CD14-positive monocyte (primary cell): ENCODE measurements at regions of chr5 and their contacts with region 1.

Region 1: DNA sequence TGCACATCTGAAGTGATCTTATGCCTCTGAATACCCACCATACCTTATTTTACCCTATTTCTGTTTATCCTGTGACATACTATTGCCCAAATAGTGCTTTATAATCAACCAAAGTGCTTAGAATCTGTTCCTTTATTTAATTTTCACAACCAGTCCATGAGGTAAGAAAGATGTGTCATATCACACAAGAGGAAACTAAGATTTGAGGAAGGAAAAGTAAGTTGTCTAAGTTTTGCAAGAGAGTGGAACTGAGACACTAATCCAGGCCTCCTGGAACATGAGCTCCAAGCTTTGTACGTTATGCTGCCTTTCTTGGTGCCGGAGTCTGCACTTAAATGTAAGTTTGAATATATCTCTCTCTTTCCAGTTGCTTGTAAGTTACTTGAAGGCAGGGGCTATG is 17.2 kb downstream of the KDM3B start:
- DNase-seq: peak; percentile 80 to 90 (median 89)
- H3K4me3 ChIP-seq: peak overlapping the region; percentile 30 to 89 (median 77)
- H3K4me3 Mint-ChIP-seq: peak overlapping the region; percentile 79 to 86
- H3K27ac ChIP-seq: peak overlapping the region; percentile 83 to 97
- H3K27ac Mint-ChIP-seq: peak overlapping the region; percentile 96 to 100 (median 99)
- H3K4me1 ChIP-seq: peaks cover 51 to 68% of the 10 kb centered on the region in 2 donors
- H3K4me1 Mint-ChIP-seq: peaks cover 60% of the 10 kb centered on the region
- H3K27me3 ChIP-seq: no peaks in the 10 kb centered on the region
- H3K27me3 Mint-ChIP-seq: no peaks in the 10 kb centered on the region
- CTCF ChIP-seq: no peak

Region 2: DNA sequence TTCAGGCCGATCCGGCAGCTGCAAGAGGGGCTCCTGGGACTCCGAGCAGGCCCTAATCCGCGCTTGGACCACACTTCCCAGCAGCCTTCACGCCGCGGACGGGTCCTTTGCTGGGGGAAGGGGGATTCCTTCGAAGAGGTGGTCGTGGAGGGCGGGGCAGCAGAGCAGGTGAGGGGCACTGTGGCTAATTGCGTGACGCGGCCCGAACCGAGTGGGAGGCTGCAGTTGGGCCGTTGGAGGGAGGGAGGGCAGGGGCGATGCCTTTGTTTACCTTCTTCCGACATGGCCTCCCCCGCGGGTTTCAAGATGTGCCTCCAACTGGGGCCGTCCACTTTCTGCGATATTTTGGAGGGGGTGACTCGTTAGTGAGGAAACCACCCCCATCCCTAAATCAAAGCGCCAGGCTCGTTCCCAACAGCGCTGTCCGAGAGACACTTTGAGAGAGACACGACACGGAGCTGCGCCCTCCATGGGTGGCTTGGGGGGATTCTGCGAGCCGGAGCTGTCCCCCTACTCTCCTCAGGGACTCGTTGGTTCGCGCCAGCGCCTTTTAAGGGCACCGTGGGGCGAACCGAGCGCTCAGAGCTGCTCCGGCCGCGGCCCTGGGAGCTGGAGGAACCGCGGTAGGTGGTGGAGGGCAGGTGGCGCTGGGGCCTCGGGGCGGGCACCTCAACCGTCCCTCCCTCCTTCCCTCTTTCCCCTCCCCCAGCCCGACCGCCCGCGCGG is 31.9 kb before region 1 on chr5 and contains the start of gene FAM53C:
- intact Hi-C with region 1: loop called in 1 of 2 experiments (anchors 5 kb)
- DNase-seq: peak; percentile 86 to 93 (median 92)
- H3K4me3 ChIP-seq: peak within 1 kb of the TSS; percentile 73 to 90 (median 87)
- H3K4me3 Mint-ChIP-seq: peak within 1 kb of the TSS; percentile 81 to 94
- H3K27ac ChIP-seq: peak within 1 kb of the TSS; percentile 93 to 98
- H3K27ac Mint-ChIP-seq: peak within 1 kb of the TSS; percentile 98 to 100 (median 100)
- H3K4me1 ChIP-seq: peaks cover 26 to 33% of the 10 kb centered on the region in 2 donors
- H3K4me1 Mint-ChIP-seq: peaks cover 36% of the 10 kb centered on the region
- H3K27me3 ChIP-seq: no peaks in the 10 kb centered on the region
- H3K27me3 Mint-ChIP-seq: no peaks in the 10 kb centered on the region
- CTCF ChIP-seq: no peak
- polyA plus RNA-seq, gene FAM53C: 24.9 to 92.2 (median 28.7) TPM